Tibial artery (tissue), 4 donors: ENCODE measurements at regions of chr7 and their contacts with region 1.

Region 1: DNA sequence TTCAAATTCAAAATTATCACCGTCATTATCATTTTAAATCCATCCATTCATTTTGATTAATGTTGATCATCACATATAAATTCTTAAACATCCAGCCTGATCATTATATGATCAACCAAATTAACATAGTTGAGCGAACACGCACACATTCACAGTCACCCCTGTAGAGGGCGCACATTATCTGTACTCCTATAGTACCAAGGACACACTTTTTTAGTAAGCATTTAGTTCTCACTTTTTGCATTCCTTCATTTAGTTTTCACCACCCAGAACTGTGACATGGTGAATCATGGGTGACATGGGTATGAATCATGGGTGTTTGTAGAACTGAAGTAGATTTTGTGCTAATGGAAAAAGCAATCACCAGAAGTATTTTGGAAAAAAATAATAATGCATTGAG is 26.0 kb upstream of the ZNF735 start:
- DNase-seq: no peak
- H3K4me3 ChIP-seq: no peak overlapping the region
- H3K27ac ChIP-seq: no peak overlapping the region
- H3K4me1 ChIP-seq: peaks cover 0 to 17% (median 4%) of the 10 kb centered on the region in 4 donors
- H3K27me3 ChIP-seq: peaks cover 0 to 30% of the 10 kb centered on the region in 2 donors
- CTCF ChIP-seq: peak in 1 of 2 experiments; percentile 32

Region 2: DNA sequence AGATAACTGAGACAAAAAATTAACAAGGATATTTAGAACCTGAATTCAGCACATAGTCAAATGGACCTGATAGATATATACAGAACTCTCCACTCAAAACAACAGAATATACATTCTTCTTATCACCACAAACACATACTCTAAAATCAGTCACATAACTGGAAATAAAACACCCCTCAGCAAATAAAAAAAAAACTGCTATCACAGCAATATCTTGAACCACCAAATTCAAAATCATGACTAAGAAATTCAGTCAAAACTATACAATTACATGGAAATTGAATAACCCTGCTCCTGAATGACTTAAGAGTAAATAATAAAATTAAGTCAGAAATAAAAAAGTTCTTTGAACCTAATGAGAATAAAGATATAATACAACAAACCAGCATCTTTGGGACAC is 212.4 kb before region 1 on chr7:
- intact Hi-C with region 1: no loop called
- DNase-seq: no peak
- H3K4me3 ChIP-seq: no peak overlapping the region
- H3K27ac ChIP-seq: no peak overlapping the region
- H3K4me1 ChIP-seq: no peaks in the 10 kb centered on the region
- H3K27me3 ChIP-seq: no peaks in the 10 kb centered on the region
- CTCF ChIP-seq: no peak

Region 3: DNA sequence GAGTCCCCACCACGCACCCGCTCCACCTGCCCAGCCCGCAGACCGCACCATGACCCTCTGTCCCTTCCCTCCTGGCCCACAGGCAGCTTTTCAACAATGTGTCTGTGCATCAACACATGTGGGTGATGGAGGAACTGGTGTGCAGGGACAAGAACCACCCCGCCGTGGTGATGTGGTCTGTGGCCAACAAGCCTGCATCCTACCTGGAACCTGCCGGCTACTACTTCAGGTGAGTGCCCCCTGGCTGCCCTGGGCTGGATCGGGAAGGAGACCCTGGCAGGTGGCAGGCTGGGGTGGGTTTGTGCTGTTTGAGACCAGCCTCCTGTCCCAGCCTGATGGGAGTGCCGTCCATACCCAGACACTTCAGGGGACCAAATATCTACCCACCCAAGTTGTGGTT is 66.2 kb before region 1 on chr7:
- intact Hi-C with region 1: no loop called
- DNase-seq: no peak
- H3K4me3 ChIP-seq: no peak overlapping the region
- H3K27ac ChIP-seq: no peak overlapping the region
- H3K4me1 ChIP-seq: no peaks in the 10 kb centered on the region
- H3K27me3 ChIP-seq: no peaks in the 10 kb centered on the region
- CTCF ChIP-seq: no peak

Region 4: GRCh38 chr7:64366921-64367320 is 185.9 kb after region 1 on chr7:
- intact Hi-C with region 1: no loop called
- DNase-seq: no peak
- H3K4me3 ChIP-seq: no peak overlapping the region
- H3K27ac ChIP-seq: no peak overlapping the region
- H3K4me1 ChIP-seq: no peaks in the 10 kb centered on the region
- H3K27me3 ChIP-seq: no peaks in the 10 kb centered on the region
- CTCF ChIP-seq: no peak

Region 5: DNA sequence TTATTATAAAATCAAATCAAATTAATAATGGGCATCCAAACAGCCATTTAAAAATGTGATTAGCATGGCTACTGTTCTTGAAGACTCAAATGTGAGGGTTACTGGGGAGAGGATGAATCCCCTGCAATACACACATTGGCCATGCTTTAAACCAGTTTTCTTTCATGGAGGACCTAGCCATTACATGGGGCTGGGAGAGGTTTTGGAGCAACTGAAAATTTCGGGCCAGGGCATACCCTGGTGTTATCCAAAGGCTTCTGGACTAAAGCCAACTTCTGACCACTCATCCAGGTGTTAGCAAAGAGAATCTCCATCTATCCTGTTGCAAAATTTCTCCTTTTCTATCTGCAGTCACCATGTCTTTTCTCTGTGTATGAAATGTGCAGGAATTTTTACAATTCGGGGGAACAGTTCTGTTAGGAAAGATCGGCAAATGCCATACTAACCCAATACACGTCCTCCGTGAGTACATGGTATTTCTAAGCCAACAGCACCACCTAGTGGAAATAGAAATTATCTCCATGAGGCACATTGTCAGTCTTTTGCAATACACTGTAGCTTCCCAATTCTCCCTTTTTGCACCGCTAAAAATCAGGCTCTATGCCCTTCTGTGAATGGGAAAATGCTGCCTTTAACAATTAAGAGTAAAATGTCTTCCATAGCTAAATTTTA is 437.9 kb after region 1 on chr7:
- intact Hi-C with region 1: loop called (anchors 2 kb)
- DNase-seq: no peak
- H3K4me3 ChIP-seq: no peak overlapping the region
- H3K27ac ChIP-seq: no peak overlapping the region
- H3K4me1 ChIP-seq: no peaks in the 10 kb centered on the region
- H3K27me3 ChIP-seq: no peaks in the 10 kb centered on the region
- CTCF ChIP-seq: peak; percentile 67 to 86

Region 6: GRCh38 chr7:64656489-64656888 is 475.5 kb after region 1 on chr7:
- intact Hi-C with region 1: no loop called
- DNase-seq: no peak
- H3K4me3 ChIP-seq: no peak overlapping the region
- H3K27ac ChIP-seq: no peak overlapping the region
- H3K4me1 ChIP-seq: no peaks in the 10 kb centered on the region
- H3K27me3 ChIP-seq: no peaks in the 10 kb centered on the region
- CTCF ChIP-seq: no peak